HCT116 (cell line): ENCODE measurements at regions of chr17 and their contacts with region 1.

Region 1: GRCh38 chr17:6853764-6854442 is 22.4 kb upstream of the TEKT1 start:
- DNase-seq: peak; percentile 68
- ATAC-seq: peak; percentile 97
- H3K4me3 ChIP-seq: peak overlapping the region; percentile 74 to 89
- H3K27ac ChIP-seq: peak overlapping the region; percentile 81
- H3K4me1 ChIP-seq: peaks cover 7 to 19% of the 10 kb centered on the region in 2 experiments; a peak in 3 of 4 replicates
- H3K27me3 ChIP-seq: no peaks in the 10 kb centered on the region
- CTCF ChIP-seq: peak; percentile 40 to 79 (median 69); a peak in 5 of 6 replicates
- POLR2A ChIP-seq: peak; percentile 40
- RAD21 ChIP-seq: no peak

Region 2: DNA sequence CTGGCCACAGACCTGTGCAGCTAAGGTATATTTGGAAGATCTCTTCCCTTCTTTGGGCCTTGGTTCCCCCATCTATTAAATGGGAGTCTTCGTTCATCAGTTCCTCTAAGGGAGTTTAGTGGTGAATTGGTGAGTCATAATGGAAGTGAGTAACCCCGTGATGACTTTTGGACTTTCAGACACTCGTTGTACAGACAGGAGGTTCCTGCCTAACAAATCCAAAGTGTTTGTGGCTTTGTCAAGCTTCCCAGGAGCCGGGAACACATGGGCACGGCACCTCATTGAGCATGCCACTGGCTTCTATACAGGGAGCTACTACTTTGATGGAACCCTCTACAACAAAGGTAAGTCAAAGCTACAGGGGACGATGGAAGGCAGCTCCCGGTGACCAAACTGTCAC is 743.3 kb before region 1 on chr17:
- CTCF ChIA-PET with region 1: no interaction called
- POLR2A ChIA-PET with region 1: no interaction called
- RAD21 ChIA-PET with region 1: no interaction called
- intact Hi-C with region 1: no loop called
- DNase-seq: no peak
- ATAC-seq: no peak
- H3K4me3 ChIP-seq: no peak overlapping the region
- H3K27ac ChIP-seq: no peak overlapping the region
- H3K4me1 ChIP-seq: no peaks in the 10 kb centered on the region
- H3K27me3 ChIP-seq: peaks cover 39% of the 10 kb centered on the region
- CTCF ChIP-seq: no peak
- POLR2A ChIP-seq: no peak
- RAD21 ChIP-seq: no peak

Region 3: DNA sequence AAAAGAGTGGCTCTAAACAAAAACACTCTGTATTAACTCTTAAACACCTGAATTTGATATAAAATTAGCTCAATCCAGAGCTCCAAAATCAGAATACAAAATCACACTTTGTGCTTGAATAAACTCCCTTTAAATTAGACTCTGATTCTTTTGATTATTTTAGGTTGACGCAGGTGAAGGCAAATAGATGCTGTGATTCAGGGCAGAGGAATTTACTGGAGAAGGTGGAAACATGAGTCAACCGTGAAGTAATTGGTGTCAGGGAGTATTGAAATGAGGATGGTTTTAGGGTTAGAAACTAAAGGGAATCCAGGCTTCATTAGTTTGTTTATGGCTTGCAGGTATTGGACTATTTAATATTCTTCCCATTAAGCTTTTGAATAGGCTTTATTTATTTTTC is 14.7 kb after region 1 on chr17:
- CTCF ChIA-PET with region 1: interaction called, 19 read pairs
- POLR2A ChIA-PET with region 1: interaction called, 5 read pairs
- RAD21 ChIA-PET with region 1: no interaction called
- intact Hi-C with region 1: no loop called
- DNase-seq: peak; percentile 74
- ATAC-seq: peak; percentile 58
- H3K4me3 ChIP-seq: peak overlapping the region in 1 of 2 experiments; percentile 34; a peak in 2 of 4 replicates
- H3K27ac ChIP-seq: peak overlapping the region; percentile 61; the same call in 1 of the 2 replicates
- H3K4me1 ChIP-seq: peaks cover 43 to 59% of the 10 kb centered on the region in 2 experiments
- H3K27me3 ChIP-seq: no peaks in the 10 kb centered on the region
- CTCF ChIP-seq: no peak
- POLR2A ChIP-seq: no peak
- RAD21 ChIP-seq: peak; percentile 4; the same call in 1 of the 2 replicates

Region 4: DNA sequence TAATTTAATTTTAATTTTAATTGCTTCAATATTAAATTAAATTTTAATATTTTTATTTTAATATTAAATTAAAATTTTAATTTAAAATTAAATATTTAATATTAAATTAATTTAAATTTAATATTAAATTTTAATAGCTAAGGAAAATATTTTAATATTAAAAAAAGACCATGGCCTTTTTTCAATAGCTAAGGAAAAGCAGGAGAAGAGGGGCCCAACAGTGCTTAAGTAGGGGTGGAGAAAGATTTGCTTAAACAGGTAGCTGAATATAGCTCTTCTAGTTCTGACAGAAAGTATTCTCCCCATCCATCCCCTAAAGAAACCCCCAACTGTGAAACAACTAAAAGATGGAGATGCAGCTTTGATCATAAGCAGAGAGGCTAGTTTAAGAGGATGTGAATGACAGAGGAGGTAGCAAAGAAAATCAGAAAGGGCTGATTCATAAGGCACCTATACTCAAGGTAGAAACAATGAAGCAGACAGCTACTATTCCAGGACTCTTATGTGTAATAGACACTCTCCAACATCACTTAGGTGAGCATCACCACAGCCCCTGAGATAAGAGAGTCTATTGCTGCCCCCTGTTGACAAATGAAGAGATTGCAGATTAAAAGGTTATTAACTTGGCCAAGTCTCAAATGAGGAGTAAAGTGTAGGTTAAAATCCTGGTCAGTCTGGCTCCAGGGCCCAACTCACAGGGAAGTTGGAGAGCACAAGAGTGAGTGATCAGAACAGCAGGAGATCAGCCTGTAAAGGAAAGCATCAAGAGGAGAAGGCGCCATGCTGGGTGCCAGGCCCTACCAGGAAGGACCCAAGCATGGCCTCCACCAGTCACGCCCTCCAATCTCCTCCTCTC is 150.7 kb after region 1 on chr17:
- CTCF ChIA-PET with region 1: interaction called, 11 read pairs
- POLR2A ChIA-PET with region 1: no interaction called
- RAD21 ChIA-PET with region 1: no interaction called
- intact Hi-C with region 1: no loop called
- DNase-seq: peak; percentile 56
- ATAC-seq: peak; percentile 87
- H3K4me3 ChIP-seq: no peak overlapping the region
- H3K27ac ChIP-seq: no peak overlapping the region
- H3K4me1 ChIP-seq: no peaks in the 10 kb centered on the region
- H3K27me3 ChIP-seq: no peaks in the 10 kb centered on the region
- CTCF ChIP-seq: peak; percentile 66 to 83 (median 82)
- POLR2A ChIP-seq: no peak
- RAD21 ChIP-seq: peak; percentile 91